PC-3 (cell line): ENCODE measurements at regions of chrX and their contacts with region 1.

Region 1: GRCh38 chrX:77693594-77693993 is 92.4 kb downstream of the ATRX start:
- DNase-seq: no peak
- ATAC-seq: no peak
- H3K4me3 ChIP-seq: no peak overlapping the region
- H3K27ac ChIP-seq: no peak overlapping the region
- H3K4me1 ChIP-seq: no peaks in the 10 kb centered on the region
- H3K27me3 ChIP-seq: no peaks in the 10 kb centered on the region
- CTCF ChIP-seq: no peak

Region 2: DNA sequence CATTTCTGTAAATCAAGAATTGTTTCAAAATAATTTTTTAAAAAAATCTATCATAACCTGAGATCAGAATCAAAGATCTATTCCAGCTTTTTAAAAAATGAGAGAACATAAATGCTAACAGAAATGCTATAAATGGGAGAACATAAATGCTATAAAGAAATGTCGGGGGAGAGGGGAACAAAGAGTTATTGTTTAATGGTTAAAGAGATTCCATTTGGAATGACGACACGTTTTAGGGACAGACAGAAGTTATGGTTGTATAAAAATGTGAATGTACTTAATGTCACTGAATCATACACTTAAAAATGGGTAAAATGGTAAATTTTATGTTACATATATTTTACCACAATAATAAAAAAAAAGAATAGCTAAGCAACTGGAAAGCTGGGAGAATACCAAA is 34.7 kb before region 1 on chrX:
- CTCF ChIA-PET with region 1: no interaction called
- POLR2A ChIA-PET with region 1: no interaction called
- intact Hi-C with region 1: loop called (anchors 5 kb)
- DNase-seq: no peak
- ATAC-seq: peak; percentile 70
- H3K4me3 ChIP-seq: no peak overlapping the region
- H3K27ac ChIP-seq: peak overlapping the region; percentile 72
- H3K4me1 ChIP-seq: 0 out of 2 replicates have a peak, but pooled peaks cover 7% of the 10 kb centered on the region
- H3K27me3 ChIP-seq: no peaks in the 10 kb centered on the region
- CTCF ChIP-seq: no peak

Region 3: GRCh38 chrX:77668391-77669237 is 25.0 kb before region 1 on chrX:
- CTCF ChIA-PET with region 1: no interaction called
- POLR2A ChIA-PET with region 1: no interaction called
- intact Hi-C with region 1: loop called (anchors 1 kb)
- DNase-seq: peak; percentile 68
- ATAC-seq: peak; percentile 84
- H3K4me3 ChIP-seq: peak overlapping the region; percentile 44; the same call in 1 of the 2 replicates
- H3K27ac ChIP-seq: peak overlapping the region; percentile 73
- H3K4me1 ChIP-seq: peaks cover 19% of the 10 kb centered on the region
- H3K27me3 ChIP-seq: no peaks in the 10 kb centered on the region
- CTCF ChIP-seq: no peak